Panc1 (cell line): ENCODE measurements at regions of chr12 and their contacts with region 1.

Region 1: DNA sequence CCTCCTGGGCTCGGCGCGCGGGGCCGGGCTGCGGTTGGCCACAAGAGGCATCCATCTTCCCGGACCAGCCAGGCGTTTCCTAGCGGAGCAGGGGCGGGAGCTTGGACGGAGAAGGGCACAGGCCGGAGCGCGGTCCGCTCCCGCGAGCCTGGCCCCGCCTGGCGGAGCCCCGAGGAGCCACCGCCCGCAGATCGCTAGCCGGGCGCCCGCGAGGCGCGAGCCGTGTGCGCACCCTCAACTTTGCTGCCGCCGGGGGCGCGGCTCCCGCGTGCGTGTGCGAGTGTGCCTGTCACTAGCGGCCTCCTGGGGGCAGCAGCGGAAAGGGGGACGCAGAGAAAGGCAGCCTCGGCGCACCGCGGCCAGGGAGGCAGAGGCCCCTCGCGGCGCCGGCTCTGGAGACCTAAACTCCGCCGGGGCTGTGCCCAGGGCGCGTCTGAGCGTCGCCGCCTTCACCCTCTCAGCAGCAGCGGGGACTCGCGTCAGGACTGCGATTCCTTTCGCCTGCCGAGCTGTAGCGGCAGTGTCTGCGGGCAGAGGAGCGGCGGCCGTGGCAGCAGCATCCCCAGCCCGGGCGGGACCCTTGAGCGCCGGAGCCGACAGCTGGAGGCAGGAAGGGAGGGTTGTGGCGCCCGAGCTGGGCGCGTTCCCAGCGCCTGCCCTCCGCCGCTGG is 644 bp upstream of the SRGAP1 start:
- DNase-seq: peak; percentile 67
- ATAC-seq: peak; percentile 93
- H3K4me3 ChIP-seq: peak overlapping the region; percentile 83 to 95
- H3K27ac ChIP-seq: peak overlapping the region; percentile 97
- H3K4me1 ChIP-seq: peaks cover 27% of the 10 kb centered on the region
- H3K27me3 ChIP-seq: no peaks in the 10 kb centered on the region
- CTCF ChIP-seq: peak; percentile 98

Region 2: GRCh38 chr12:63869624-63870023 is 25.8 kb after region 1 on chr12:
- CTCF ChIA-PET with region 1: no interaction called
- POLR2A ChIA-PET with region 1: no interaction called
- in situ Hi-C with region 1: no loop called
- intact Hi-C with region 1: no loop called
- DNase-seq: no peak
- ATAC-seq: no peak
- H3K4me3 ChIP-seq: no peak overlapping the region
- H3K27ac ChIP-seq: peak overlapping the region; percentile 51; the same call in 1 of the 2 replicates
- H3K4me1 ChIP-seq: peaks cover 39% of the 10 kb centered on the region
- H3K27me3 ChIP-seq: no peaks in the 10 kb centered on the region
- CTCF ChIP-seq: no peak

Region 3: GRCh38 chr12:63917864-63918799 is 74.3 kb after region 1 on chr12:
- CTCF ChIA-PET with region 1: interaction called, 9 read pairs
- POLR2A ChIA-PET with region 1: no interaction called
- in situ Hi-C with region 1: no loop called
- intact Hi-C with region 1: loop called (anchors 5 kb)
- DNase-seq: peak; percentile 90
- ATAC-seq: peak; percentile 81
- H3K4me3 ChIP-seq: peak overlapping the region; percentile 6 to 42; a peak in 3 of 4 replicates
- H3K27ac ChIP-seq: peak overlapping the region; percentile 99
- H3K4me1 ChIP-seq: peaks cover 92% of the 10 kb centered on the region
- H3K27me3 ChIP-seq: no peaks in the 10 kb centered on the region
- CTCF ChIP-seq: no peak

Region 4: DNA sequence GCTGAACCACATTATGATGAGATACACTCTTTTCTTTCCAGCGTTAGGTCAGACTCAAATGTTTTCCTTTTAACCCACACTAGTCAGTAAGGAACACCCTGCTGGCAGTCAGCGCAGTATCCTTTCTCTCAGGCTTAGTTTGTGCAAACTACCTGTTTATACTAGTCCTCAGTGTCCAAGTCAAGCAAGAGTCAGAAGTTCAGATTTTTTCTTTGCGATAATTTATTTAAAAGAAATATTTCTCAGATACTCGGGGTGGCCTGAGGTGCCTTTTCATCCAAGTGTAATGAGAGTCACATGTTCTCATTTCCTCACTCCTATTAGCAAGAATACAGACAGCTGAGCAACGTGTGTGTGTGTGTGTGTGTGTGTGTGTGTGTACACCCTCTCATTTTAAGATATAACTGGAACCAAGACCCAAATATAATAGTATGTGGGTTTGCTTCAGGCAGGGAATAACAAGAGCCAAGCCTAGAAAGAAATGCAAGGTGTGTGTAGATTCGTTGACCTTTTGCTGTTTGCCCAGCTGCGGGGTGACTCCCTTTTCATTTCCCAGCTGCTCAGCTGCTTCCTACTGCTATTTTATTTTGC is 195.5 kb after region 1 on chr12:
- CTCF ChIA-PET with region 1: no interaction called
- POLR2A ChIA-PET with region 1: no interaction called
- in situ Hi-C with region 1: no loop called
- intact Hi-C with region 1: loop called (anchors 10 kb)
- DNase-seq: peak; percentile 38
- ATAC-seq: peak; percentile 87
- H3K4me3 ChIP-seq: peak overlapping the region; percentile 3 to 41; a peak in 2 of 4 replicates
- H3K27ac ChIP-seq: peak overlapping the region; percentile 84
- H3K4me1 ChIP-seq: peaks cover 29% of the 10 kb centered on the region
- H3K27me3 ChIP-seq: no peaks in the 10 kb centered on the region
- CTCF ChIP-seq: no peak

Region 5: DNA sequence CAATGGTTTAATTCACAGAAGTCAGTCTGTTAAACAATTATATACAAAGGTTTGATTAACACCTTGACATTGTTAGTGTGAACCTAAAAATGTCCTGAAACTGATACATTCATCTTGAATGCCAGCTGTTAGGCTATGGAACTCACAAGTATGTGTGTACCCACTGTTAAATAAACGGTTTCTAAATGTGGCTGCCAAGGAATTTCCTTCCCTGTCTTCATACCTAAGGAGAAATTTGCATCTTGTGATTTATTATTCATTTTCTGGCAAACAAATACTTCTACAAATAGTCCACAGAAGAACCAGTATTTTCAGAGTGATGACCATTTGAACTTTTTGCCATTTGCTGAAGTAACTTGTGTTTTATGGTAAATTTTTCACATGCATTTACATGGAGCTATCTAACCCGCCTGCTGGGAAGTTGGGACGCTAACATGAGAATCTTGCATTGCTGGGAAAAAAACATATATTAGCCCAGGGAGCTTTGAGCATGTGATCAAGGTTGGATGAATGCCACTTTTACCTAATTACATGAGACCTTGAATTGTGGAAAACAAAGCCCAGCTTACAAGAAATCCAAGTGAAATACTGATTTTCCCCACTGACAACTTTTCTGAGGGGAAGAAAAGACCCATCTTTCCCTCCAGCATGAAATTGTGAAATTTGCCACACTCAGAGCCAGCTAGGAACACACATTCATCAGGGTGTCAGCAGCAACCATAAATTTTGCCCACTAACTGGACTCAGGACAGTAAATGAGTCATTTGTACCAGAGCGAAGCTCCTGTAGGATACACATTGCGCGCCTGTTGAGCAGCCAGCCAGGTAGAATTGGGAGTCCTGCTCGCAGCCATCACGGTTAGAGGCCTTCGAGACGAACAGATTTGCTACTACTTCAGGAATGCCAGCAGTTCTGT is 260.2 kb after region 1 on chr12:
- CTCF ChIA-PET with region 1: no interaction called
- POLR2A ChIA-PET with region 1: no interaction called
- in situ Hi-C with region 1: no loop called
- intact Hi-C with region 1: loop called (anchors 10 kb)
- DNase-seq: no peak
- ATAC-seq: no peak
- H3K4me3 ChIP-seq: no peak overlapping the region
- H3K27ac ChIP-seq: no peak overlapping the region
- H3K4me1 ChIP-seq: peaks cover 5% of the 10 kb centered on the region; the same call in 1 of the 2 replicates
- H3K27me3 ChIP-seq: no peaks in the 10 kb centered on the region
- CTCF ChIP-seq: no peak

Region 6: GRCh38 chr12:64181504-64182291 is 337.8 kb after region 1 on chr12:
- CTCF ChIA-PET with region 1: interaction called, 7 read pairs
- POLR2A ChIA-PET with region 1: no interaction called
- in situ Hi-C with region 1: no loop called
- intact Hi-C with region 1: loop called (anchors 5 kb)
- DNase-seq: peak; percentile 93
- ATAC-seq: peak; percentile 96
- H3K4me3 ChIP-seq: peak overlapping the region in 1 of 2 experiments; percentile 2; a peak in 1 of 4 replicates
- H3K27ac ChIP-seq: peak overlapping the region; percentile 86
- H3K4me1 ChIP-seq: peaks cover 19% of the 10 kb centered on the region
- H3K27me3 ChIP-seq: no peaks in the 10 kb centered on the region
- CTCF ChIP-seq: peak; percentile 80

Region 7: GRCh38 chr12:64256166-64256800 is 412.4 kb after region 1 on chr12:
- CTCF ChIA-PET with region 1: no interaction called
- POLR2A ChIA-PET with region 1: no interaction called
- in situ Hi-C with region 1: no loop called
- intact Hi-C with region 1: loop called (anchors 1 kb)
- DNase-seq: no peak
- ATAC-seq: peak; percentile 60
- H3K4me3 ChIP-seq: no peak overlapping the region
- H3K27ac ChIP-seq: no peak overlapping the region
- H3K4me1 ChIP-seq: no peaks in the 10 kb centered on the region
- H3K27me3 ChIP-seq: no peaks in the 10 kb centered on the region
- CTCF ChIP-seq: peak; percentile 66; the same call in 1 of the 2 replicates